ENCODE measurements at regions of chrX and their contacts with region 1.

Region 1: DNA sequence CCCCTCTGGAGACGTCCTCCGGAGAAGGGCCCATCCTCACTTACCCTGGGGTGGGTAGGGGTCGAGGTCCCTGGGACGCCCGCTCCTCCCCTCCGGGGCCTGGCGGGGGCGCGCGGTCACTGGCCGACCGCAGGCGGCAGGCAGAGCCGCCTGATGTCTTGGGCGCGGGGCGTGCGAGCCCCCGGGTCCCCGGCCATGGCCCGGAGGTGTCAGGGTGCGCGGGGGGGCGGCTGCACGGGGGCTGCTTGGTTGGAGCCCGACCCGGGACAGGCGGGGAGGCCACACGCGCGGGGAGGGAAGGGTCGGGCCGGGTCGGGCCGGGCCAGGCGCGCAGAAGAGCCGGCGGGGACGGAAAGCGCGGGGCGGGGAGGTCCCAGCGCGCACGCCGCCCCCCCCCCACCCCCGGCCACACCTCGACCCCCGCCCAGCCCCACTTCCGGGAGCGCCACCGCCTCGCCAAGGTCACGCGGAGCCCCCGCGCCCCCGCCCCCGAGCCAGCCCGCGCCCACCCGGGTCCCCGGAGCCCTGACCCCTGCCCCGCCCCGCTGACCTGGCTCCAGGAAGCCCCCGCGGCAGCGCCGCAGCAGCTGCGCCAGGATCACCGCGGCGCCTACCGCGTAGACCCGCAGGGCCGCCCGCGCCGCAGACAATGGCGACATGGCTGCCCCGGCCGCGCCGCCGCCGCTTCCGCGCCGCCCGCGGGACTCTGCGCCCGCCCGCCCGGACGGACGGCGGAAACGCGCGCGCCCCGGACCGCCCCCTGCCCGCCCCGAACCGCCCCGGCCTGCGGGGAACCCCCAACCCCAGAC is at the starts of genes DHRSX and ZBED1:
- DNase-seq: no peak
- H3K4me3 ChIP-seq: peak within 1 kb of the TSS; percentile 59 to 94 (median 86)
- H3K27ac ChIP-seq: peak within 1 kb of the TSS; percentile 86 to 90 (median 90)
- H3K4me1 ChIP-seq: peaks cover 0 to 35% (median 31%) of the 10 kb centered on the region in 4 donors
- H3K27me3 ChIP-seq: no peaks in the 10 kb centered on the region
- CTCF ChIP-seq: no peak
- EP300 ChIP-seq: no peak
- POLR2A ChIP-seq: no peak
- total RNA-seq, gene DHRSX: 12.5 to 25.2 (median 15.1) TPM
- total RNA-seq, gene ZBED1: 25.8 to 35.6 (median 27.6) TPM

Region 2: GRCh38 chrX:1591102-1591900 is 909.2 kb before region 1 on chrX and contains the start of gene AKAP17A:
- intact Hi-C with region 1: loop called (anchors 5 kb)
- DNase-seq: peak; percentile 98
- H3K4me3 ChIP-seq: peak within 1 kb of the TSS; percentile 79 to 99 (median 90)
- H3K27ac ChIP-seq: peak within 1 kb of the TSS; percentile 80 to 89 (median 85)
- H3K4me1 ChIP-seq: peaks cover 0 to 32% (median 23%) of the 10 kb centered on the region in 4 donors
- H3K27me3 ChIP-seq: no peaks in the 10 kb centered on the region
- CTCF ChIP-seq: no peak
- EP300 ChIP-seq: peak in 1 of 4 donors; percentile 40
- POLR2A ChIP-seq: no peak
- total RNA-seq, gene AKAP17A: 22.1 to 45.1 (median 26.4) TPM

Region 3: DNA sequence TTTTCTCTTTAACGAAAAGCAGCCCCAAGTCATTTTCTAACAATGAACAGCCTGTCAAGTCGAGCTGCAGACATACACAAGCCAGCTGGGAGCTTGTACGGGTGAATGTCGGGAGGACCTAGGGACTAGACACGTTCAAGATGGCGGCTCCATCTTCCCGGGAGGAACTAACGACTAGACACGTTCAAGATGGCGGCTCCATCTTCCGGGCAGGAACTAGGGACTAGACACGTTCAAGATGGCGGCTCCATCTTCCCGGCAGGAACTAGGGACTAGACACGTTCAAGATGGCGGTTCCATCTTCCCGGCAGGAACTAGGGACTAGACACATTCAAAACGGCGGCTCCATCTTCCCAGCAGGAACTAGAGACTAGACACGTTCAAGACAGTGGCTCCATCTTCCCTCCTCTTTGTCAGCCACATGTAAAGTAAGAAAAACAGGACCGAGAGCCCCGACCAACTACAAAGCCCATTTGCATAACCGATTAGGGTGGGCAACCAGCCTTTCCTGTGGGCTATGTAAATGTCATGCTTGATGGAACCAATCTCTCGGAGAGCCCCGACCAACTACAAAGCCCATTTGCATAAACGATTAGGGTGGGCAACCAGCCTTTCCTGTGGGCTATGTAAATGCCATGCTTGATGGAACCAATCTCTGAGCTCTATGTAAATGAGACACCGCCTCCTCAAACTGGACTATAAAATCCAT is 175.2 kb before region 1 on chrX:
- intact Hi-C with region 1: loop called (anchors 2 kb)
- DNase-seq: peak; percentile 96
- H3K4me3 ChIP-seq: peak overlapping the region in 3 of 4 donors; percentile 30 to 52 (median 39)
- H3K27ac ChIP-seq: peak overlapping the region; percentile 10 to 75 (median 67)
- H3K4me1 ChIP-seq: peaks cover 0 to 9% (median 8%) of the 10 kb centered on the region in 4 donors
- H3K27me3 ChIP-seq: no peaks in the 10 kb centered on the region
- CTCF ChIP-seq: no peak
- EP300 ChIP-seq: no peak
- POLR2A ChIP-seq: no peak

Region 4: DNA sequence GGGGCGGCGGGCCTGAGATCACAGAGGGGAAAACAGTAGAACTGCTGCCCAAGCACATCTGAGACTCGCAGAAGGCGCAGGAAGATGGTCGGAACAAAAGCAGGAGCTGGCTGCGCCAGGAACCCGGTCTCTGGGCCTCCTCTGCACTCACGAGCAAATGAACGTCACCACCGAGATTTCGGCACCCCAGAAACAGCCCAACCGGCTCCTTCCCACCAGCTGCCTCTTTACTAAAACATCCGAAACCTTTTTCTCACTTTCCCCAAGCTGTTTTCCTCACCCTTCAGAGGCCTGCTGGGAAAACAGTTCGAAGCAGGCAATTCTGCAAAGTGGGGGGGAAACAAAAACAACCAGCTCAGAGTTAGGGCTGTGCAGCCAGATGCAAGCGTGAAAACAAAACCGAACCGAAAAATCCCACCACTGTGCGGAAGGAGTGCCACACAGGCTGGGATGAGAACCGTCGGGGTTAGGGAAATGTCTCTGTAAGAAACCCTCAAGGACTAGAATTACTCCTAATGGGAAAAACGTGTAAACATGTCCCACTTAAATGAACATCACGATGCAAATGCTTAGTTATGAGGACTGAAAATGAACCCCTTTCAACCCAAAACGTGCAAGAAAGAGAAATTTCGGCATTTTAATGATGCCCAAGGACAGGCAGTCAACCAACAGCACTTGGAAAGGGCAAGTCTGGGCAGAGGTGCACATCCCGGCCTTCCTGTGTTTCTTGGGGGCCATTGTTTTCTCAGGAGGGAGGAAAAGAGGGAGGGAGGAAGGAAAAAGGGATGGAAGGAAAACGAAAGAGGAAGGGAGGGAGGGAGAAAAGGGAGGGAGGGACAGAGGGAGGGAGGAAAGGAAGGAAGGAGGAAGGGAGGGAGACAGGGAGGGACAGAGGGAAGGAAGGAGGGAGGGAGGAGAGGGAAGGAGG is 15.5 kb before region 1 on chrX:
- intact Hi-C with region 1: loop called (anchors 2 kb)
- DNase-seq: peak; percentile 73
- H3K4me3 ChIP-seq: peak overlapping the region in 3 of 4 donors; percentile 26 to 34 (median 33)
- H3K27ac ChIP-seq: peak overlapping the region; percentile 75 to 85 (median 78)
- H3K4me1 ChIP-seq: peaks cover 0 to 18% (median 11%) of the 10 kb centered on the region in 4 donors
- H3K27me3 ChIP-seq: no peaks in the 10 kb centered on the region
- CTCF ChIP-seq: no peak
- EP300 ChIP-seq: no peak
- POLR2A ChIP-seq: no peak

Region 5: GRCh38 chrX:2589186-2590030 is 88.9 kb after region 1 on chrX:
- intact Hi-C with region 1: loop called (anchors 5 kb)
- DNase-seq: no peak
- H3K4me3 ChIP-seq: no peak overlapping the region
- H3K27ac ChIP-seq: no peak overlapping the region
- H3K4me1 ChIP-seq: peaks cover 0 to 4% (median under 1%) of the 10 kb centered on the region in 4 donors
- H3K27me3 ChIP-seq: peaks cover 3 to 11% (median 9%) of the 10 kb centered on the region in 3 donors
- CTCF ChIP-seq: no peak
- EP300 ChIP-seq: no peak
- POLR2A ChIP-seq: no peak

Region 6: DNA sequence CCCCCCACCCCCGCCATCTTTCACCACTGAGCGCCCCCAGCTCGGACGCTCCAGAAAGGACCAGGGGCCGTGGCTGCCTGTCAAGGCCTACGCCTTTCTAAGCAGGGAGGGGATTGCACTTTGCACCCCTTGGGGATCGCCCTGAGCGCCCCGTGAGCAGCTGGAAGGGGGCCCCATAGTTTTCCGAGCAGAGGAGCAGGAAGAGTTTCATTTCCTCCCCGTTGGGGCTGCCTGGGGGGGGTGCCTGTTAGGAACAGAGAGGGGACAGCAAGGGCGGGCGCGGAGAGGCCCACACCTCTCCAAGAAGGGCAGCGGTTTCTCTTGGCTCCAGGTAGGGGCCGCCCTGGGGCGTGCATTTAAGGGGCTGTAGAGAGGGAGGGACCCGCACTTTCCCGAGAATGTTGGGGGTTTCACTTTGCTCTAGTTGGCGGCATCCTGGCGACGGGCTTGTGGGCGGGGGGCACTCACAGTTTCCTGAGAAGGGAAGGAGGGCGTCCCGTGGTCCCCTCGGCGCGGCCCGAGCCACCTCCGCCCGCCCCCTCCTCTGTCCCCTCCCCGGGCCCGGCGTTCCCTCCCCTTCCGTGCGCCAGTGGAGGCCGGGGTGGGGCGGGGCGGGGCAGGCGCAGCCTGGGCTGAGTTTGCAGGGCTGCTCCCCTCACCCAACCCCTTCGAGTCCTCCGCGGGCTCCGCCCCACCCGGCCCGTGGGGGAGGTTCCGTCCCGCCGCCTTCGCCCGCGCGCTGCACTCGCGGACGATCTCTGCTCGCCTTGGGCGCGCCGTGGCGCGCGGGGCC is 108.4 kb after region 1 on chrX:
- intact Hi-C with region 1: loop called (anchors 5 kb)
- DNase-seq: peak; percentile 91
- H3K4me3 ChIP-seq: peak overlapping the region; percentile 63 to 89 (median 76)
- H3K27ac ChIP-seq: peak overlapping the region; percentile 73 to 83 (median 76)
- H3K4me1 ChIP-seq: peaks cover 0 to 14% (median 11%) of the 10 kb centered on the region in 4 donors
- H3K27me3 ChIP-seq: no peaks in the 10 kb centered on the region
- CTCF ChIP-seq: no peak
- EP300 ChIP-seq: no peak
- POLR2A ChIP-seq: no peak

Region 7: DNA sequence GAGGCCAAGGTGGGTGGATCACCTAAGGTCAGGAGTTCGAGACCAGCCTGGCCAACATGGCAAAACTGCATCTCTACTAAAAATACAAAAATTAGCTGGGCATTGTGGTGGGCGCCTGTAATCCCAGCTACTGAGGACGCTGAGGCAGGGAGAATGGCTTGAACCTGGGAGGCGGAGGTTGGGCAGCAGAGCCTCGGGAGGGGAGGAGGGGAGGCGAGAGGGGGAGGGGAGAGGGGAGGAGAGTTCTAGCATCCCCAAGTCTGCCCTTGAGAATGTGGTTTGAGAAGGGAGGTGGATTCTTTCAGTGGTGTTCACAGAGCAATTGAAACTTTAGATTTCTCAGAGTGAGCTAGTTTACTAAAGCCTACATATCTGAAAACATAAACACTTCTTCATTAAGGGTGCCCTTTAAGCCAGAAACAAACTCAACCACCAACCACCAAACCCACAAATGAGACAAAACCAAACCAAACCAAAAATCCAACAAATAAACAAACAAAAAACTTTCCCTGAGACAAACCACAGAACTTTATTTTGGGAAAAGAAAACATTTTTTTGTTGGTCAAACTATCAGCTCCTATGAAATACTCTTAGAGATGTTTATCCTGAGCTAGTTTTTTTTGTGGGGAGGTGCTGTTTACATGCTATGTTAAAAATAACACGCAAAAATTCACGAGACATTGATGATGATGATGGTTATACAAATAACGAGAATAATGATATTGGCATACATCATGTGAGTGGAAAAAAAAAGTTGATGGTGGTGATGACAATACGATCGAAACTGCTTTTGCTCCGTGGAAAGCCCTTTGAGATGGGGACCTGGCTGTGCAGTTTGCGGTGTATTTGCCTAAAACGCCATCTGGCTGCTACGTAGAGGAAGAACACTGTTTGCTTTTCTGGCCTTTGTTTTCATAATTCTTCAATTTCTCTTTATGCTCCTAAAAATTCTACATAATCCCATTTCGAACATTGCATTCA is 1311.2 kb after region 1 on chrX:
- intact Hi-C with region 1: loop called (anchors 10 kb)
- DNase-seq: no peak
- H3K4me3 ChIP-seq: no peak overlapping the region
- H3K27ac ChIP-seq: no peak overlapping the region
- H3K4me1 ChIP-seq: peaks cover 0 to 17% (median 1%) of the 10 kb centered on the region in 4 donors
- H3K27me3 ChIP-seq: no peaks in the 10 kb centered on the region
- CTCF ChIP-seq: peak in 1 of 4 experiments; percentile 40
- EP300 ChIP-seq: no peak
- POLR2A ChIP-seq: no peak

Measured in sigmoid colon (tissue), 7 donors.